ENCODE measurements at regions of chr1 and their contacts with region 1.

Region 1: DNA sequence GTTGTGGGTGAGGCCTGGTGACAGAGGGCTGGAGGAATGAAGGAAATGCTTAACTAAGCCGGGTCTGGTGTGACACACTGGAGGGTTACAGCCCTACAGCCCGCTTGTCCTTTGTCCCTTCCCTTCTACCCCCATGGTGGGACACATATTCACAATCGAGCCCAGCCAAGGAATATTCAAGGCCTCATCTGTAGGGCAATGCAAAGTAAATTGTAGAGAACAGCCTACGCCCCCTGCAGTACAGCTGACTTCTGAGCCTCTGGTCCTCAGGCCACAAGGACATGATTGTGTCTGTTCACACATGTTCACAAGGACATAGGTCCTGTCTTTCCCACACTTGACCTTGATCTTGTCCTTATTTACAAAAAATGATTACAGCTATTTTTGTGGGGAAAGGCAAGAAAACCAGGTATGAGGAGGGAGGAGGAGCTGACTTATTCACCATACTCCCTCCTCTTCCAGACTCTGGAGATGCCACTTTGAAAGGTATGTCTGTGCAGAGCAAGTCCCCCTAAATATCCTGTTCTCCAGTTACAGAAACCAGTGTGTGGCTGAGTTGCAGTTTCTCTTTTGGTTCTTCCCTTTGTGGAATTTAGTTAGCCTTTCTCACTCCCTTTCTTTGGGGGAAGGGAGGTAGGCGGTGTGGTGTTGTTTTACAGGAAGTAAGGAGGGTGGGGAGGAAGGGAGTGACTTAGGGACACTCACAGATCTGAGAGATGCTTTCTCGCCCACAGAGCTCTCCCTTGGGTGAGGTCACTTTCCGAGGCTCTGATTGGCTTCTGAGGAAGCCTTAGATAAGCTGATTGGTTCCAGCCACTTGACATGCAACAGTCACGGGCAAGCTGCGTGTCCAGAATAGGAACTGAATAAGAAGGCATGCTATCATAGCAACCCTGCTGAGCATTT is 14.6 kb downstream of the POLR3GL start:
- DNase-seq: peak; percentile 94 to 97 (median 97)
- H3K4me3 ChIP-seq: peak overlapping the region in 6 of 7 experiments; percentile 23 to 50 (median 34)
- H3K27ac ChIP-seq: peak overlapping the region; percentile 77 to 94
- H3K4me1 ChIP-seq: peaks cover 34 to 53% (median 46%) of the 10 kb centered on the region in 4 experiments
- H3K27me3 ChIP-seq: no peaks in the 10 kb centered on the region

Region 2: DNA sequence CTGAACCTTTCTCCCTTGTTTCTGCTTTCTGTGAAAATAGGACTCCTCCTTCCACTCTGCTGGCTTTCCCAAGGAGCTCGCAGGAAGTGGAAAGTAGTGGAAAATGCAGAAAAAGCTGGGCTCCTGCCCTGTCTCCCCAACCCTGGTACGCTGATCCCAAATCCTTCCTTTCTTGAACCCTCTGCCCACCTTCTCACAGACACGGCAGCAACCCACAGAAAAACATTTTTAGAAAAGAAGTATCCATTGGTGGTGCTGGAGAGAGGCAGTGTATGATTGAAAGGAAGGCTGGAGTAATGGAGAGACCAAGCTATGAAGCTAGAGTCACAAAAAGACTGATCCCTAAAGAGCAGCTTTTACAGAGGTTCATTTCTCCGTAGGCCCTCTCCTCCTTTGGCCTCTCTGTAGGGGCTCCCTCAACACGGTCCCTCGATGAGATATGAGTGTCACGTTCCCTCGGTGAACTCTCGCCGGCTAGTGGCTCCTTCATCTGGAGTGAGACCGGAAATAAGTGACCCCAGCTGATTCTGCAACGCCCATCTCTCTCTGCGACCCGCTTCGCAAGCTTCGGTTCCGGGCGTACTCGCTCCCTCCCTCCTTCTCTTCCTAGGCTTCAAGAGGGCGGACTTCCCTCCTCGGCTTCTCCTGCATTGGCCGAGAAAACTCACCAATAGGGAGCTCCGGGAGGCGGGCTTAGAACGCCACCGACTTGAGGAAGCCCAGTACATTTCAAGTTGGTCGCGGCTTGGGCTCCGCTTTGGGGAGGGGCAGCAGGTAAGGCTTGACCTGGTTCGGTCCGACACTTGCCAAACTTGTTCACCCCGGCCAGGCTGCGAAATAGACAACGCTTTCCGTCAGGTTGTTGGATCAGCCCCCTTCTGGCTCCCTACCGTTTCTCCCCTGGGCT is 14.9 kb before region 1 on chr1 and contains the starts of genes ANKRD34A and POLR3GL:
- CTCF ChIA-PET with region 1: interaction called, 47 read pairs
- POLR2A ChIA-PET with region 1: no interaction called
- DNase-seq: peak; percentile 91 to 95 (median 94)
- H3K4me3 ChIP-seq: peak within 1 kb of the TSS; percentile 82 to 98 (median 96)
- H3K27ac ChIP-seq: peak within 1 kb of the TSS; percentile 68 to 93
- H3K4me1 ChIP-seq: peaks cover 31 to 58% (median 49%) of the 10 kb centered on the region in 4 experiments
- H3K27me3 ChIP-seq: peaks cover 0 to 3% (median 0%) of the 10 kb centered on the region in 5 experiments

Region 3: GRCh38 chr1:145996433-145997015 is 17.4 kb after region 1 on chr1 and contains the start of gene TXNIP:
- CTCF ChIA-PET with region 1: interaction called, 126 read pairs
- POLR2A ChIA-PET with region 1: interaction called, 5 read pairs
- DNase-seq: peak; percentile 91 to 94 (median 91)
- H3K4me3 ChIP-seq: peak within 1 kb of the TSS; percentile 67 to 100 (median 95)
- H3K27ac ChIP-seq: peak within 1 kb of the TSS; percentile 64 to 93
- H3K4me1 ChIP-seq: peaks cover 36 to 67% (median 53%) of the 10 kb centered on the region in 4 experiments
- H3K27me3 ChIP-seq: no peaks in the 10 kb centered on the region

Region 4: GRCh38 chr1:146001709-146002108 is 22.6 kb after region 1 on chr1:
- CTCF ChIA-PET with region 1: interaction called, 242 read pairs
- POLR2A ChIA-PET with region 1: interaction called, 10 read pairs
- DNase-seq: no peak
- H3K4me3 ChIP-seq: no peak overlapping the region
- H3K27ac ChIP-seq: no peak overlapping the region
- H3K4me1 ChIP-seq: peaks cover 12 to 39% (median 30%) of the 10 kb centered on the region in 4 experiments
- H3K27me3 ChIP-seq: no peaks in the 10 kb centered on the region

Region 5: GRCh38 chr1:146007506-146008133 is 28.5 kb after region 1 on chr1:
- CTCF ChIA-PET with region 1: interaction called, 242 read pairs
- POLR2A ChIA-PET with region 1: interaction called, 10 read pairs
- DNase-seq: no peak
- H3K4me3 ChIP-seq: no peak overlapping the region
- H3K27ac ChIP-seq: peak overlapping the region in 1 of 2 experiments; percentile 82
- H3K4me1 ChIP-seq: peaks cover 0 to 13% (median 10%) of the 10 kb centered on the region in 4 experiments
- H3K27me3 ChIP-seq: no peaks in the 10 kb centered on the region

Region 6: DNA sequence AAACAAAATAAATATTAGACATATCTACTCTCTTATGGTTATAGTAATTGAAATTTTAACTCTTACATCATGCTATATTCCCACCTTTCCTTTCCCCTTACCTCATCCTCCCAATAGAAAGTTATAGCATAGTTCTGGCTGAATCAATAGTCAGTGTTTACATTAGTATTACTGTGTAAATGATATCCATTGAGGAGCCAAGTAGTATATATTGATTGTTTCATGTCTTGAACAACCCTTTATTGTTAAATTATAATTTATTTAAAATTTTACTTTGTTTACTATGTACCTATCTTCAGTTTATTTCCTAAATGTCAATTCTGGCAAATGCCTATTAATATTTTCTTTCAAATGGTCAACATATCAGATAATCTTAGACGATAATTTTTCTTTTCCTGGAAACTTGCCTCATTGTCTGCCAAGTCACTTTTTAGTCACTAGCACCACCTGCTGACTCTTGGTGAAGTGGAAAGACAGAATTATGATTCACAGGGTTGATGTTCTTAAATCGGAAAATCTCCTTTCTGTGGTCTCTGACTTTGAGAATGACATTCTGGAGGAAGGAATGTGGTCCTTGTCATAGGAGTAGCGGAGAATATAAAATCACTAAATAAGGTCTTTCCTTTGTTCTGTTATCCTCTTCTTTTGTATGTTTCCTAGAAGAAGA is 33.8 kb after region 1 on chr1:
- CTCF ChIA-PET with region 1: interaction called, 242 read pairs
- POLR2A ChIA-PET with region 1: interaction called, 10 read pairs
- DNase-seq: peak; percentile 77 to 85 (median 81)
- H3K4me3 ChIP-seq: no peak overlapping the region
- H3K27ac ChIP-seq: no peak overlapping the region
- H3K4me1 ChIP-seq: peaks cover 0 to 5% (median 1%) of the 10 kb centered on the region in 4 experiments
- H3K27me3 ChIP-seq: peaks cover 0 to 11% (median 0%) of the 10 kb centered on the region in 5 experiments

Region 7: DNA sequence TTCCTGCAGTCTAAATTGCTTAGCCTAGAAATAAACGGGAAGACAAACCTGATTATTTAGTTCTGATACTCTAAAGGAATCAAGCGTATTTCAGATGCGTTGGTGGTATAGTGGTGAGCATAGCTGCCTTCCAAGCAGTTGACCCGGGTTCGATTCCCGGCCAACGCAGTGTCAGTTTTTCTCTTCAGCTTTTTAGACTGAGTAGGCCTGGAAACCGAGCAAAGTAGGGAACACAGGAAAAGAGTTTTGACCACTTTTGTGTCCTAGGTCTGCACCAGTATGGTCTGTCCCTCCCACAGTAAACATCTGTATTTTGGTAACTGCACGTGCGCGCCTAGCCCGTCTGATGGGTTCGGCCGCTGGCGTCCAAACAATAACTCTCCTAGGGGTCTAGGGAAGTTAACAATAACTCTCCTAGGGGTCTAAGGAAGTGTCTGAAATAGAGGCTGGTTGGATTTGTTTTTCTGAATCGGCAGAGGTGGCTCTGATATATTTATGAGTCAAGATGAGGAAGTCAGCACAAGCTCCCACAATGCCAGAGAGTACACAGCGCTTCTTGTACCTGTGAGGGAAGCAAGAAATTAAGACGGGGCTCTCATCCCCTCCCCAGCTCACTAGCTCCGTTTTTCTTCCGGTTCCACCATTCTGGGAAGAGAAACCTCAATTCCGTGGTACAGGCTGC is 58.0 kb after region 1 on chr1:
- CTCF ChIA-PET with region 1: interaction called, 11 read pairs
- POLR2A ChIA-PET with region 1: no interaction called
- DNase-seq: peak; percentile 84 to 90 (median 90)
- H3K4me3 ChIP-seq: peak overlapping the region; percentile 64 to 99 (median 94)
- H3K27ac ChIP-seq: peak overlapping the region; percentile 67 to 89
- H3K4me1 ChIP-seq: peaks cover 3 to 25% (median 15%) of the 10 kb centered on the region in 4 experiments
- H3K27me3 ChIP-seq: no peaks in the 10 kb centered on the region